ENCODE measurements at regions of chr2 and their contacts with region 1.

Region 1: DNA sequence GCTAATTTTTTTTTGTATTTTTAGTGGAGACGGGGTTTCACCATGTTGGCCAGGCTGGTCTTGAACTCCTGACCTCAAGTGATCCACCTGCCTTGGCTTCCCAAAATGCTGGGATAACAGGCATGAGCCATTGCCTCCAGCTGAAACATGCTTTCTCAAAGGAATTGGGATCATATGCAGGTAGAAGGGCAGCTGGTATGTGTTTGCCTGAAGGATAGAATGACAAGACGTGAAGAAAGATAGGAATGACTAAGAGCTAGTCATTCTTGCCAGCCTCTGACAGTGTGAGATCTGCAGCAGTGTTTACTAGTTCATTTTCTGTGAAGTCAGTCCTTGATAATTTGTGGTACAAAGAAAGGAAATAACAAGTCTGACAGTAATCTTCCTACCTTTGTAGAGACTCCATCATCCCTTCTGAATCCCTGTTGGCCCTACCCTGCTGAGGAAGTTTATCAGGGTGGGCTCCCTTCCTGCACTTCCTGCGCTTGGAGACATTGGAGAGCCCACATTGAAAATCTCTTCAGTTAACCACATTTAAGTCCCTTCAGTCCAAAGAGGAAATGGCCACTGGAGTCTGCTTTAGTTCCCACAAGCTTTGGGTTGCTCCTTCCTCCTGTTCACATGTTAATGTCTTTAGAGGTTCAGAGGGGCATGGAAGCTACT is 14.7 kb downstream of the CFLAR start:
- DNase-seq: peak; percentile 50
- H3K4me3 Mint-ChIP-seq: peak overlapping the region; percentile 70
- H3K27ac Mint-ChIP-seq: peak overlapping the region; percentile 96
- H3K4me1 Mint-ChIP-seq: peaks cover 76% of the 10 kb centered on the region
- H3K27me3 Mint-ChIP-seq: no peaks in the 10 kb centered on the region

Region 2: GRCh38 chr2:201118121-201118960 is 12.3 kb before region 1 on chr2:
- CTCF ChIA-PET with region 1: interaction called, 16 read pairs
- POLR2A ChIA-PET with region 1: interaction called, 7 read pairs
- DNase-seq: peak; percentile 90
- H3K4me3 Mint-ChIP-seq: peak overlapping the region; percentile 91
- H3K27ac Mint-ChIP-seq: peak overlapping the region; percentile 97
- H3K4me1 Mint-ChIP-seq: peaks cover 64% of the 10 kb centered on the region
- H3K27me3 Mint-ChIP-seq: no peaks in the 10 kb centered on the region

Region 3: DNA sequence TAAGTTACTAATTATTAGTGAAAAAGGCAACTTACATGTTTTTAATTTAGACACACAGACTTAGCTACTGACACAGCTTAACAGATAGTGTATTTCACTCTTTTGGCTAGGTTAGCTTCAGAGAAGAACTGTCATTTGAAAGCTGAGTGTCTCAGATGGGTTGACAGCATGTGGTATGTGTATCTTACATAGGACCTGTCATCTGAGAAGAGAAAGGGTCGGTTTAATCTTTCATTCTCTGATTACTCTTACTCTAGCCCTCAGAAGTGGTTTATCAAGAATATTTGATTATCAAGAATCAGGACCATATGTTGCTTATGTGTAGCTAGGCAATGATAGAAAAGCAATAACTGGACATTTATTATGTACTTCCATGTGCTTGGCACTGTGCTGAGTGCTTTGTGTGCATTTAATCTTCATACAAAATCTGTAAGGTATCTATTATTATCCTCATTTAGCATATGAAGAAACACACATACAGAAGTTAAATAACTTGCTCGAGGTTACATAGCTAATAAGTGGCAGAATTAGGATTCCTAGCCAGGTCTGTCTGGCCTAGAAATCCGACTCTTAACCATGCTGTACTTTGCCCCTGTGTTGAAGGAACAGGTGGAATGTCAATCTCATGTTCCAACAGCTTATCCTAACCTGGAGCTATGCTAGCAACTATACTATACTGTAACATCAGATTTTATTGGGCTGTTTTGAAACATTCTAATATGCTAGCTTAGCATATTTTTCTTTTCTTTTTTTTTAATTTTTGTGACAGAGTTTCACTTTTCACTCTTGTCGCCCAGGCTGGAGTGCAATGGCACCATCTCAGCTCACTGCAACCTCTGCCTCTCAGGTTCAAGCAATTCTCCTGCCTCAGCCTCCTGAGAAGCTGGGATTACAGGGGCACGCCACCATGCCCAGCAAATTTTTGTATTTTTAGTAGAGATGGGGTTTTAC is 13.7 kb after region 1 on chr2:
- CTCF ChIA-PET with region 1: interaction called, 15 read pairs
- POLR2A ChIA-PET with region 1: interaction called, 3 read pairs
- DNase-seq: no peak
- H3K4me3 Mint-ChIP-seq: no peak overlapping the region
- H3K27ac Mint-ChIP-seq: peak overlapping the region; percentile 2
- H3K4me1 Mint-ChIP-seq: peaks cover 8% of the 10 kb centered on the region
- H3K27me3 Mint-ChIP-seq: no peaks in the 10 kb centered on the region